Testis (tissue), 5 donors: ENCODE measurements at regions of chr4 and their contacts with region 1.

Region 1: GRCh38 chr4:185471235-185472102 is at the start of gene CCDC110:
- DNase-seq: peak; percentile 96
- H3K4me3 ChIP-seq: peak within 1 kb of the TSS; percentile 82 to 93
- H3K27ac ChIP-seq: peak within 1 kb of the TSS; percentile 80 to 87
- H3K4me1 ChIP-seq: no peaks in the 10 kb centered on the region
- H3K27me3 ChIP-seq: no peaks in the 10 kb centered on the region
- CTCF ChIP-seq: peak; percentile 61 to 77 (median 69)
- POLR2A ChIP-seq: no peak
- total RNA-seq, gene CCDC110: 39.1 to 78.1 TPM

Region 2: DNA sequence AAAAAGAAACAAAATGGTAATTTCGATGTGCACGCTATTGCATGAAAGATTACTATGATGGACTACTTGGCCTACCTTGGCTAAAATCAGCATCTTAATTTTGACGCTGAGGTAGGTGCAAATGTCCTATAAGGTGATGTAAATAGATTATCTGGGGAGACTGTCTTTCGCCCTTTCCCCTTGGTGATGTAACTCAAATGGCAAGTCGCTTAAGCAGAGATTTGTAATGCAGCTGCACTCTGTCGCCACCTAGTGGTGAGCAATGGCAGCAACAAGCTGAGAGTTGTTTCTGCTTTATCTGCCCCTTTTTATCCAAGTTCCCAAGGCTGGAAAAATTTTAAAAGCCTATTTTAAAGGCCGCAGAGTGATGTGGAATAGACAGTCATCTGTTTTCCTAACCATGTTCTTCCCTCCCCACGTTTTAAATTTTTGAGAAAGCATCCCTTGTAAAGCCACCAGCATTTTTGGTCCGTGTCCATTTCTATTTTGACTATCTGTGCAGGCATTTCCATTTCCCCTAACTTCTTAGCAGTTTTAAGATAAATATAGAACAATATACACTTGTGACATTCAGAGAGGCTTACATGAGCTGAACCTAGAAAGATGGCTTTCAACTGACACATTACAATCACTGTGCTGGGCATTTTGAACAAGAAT is 126.2 kb after region 1 on chr4:
- intact Hi-C with region 1: loop called (anchors 10 kb)
- DNase-seq: peak; percentile 86
- H3K4me3 ChIP-seq: no peak overlapping the region
- H3K27ac ChIP-seq: no peak overlapping the region
- H3K4me1 ChIP-seq: peaks cover 7% of the 10 kb centered on the region
- H3K27me3 ChIP-seq: no peaks in the 10 kb centered on the region
- CTCF ChIP-seq: peak; percentile 97 to 100 (median 99)
- POLR2A ChIP-seq: no peak